CD8-positive, alpha-beta T cell (primary cell): ENCODE measurements at regions of chr11 and their contacts with region 1.

Region 1: GRCh38 chr11:22625448-22626287 is at the start of gene FANCF:
- DNase-seq: peak; percentile 89 to 100 (median 93)
- ATAC-seq: peak; percentile 93
- H3K4me3 ChIP-seq: peak within 1 kb of the TSS; percentile 80 to 96
- H3K4me3 Mint-ChIP-seq: peak within 1 kb of the TSS; percentile 99
- H3K27ac ChIP-seq: peak within 1 kb of the TSS; percentile 86 to 95
- H3K27ac Mint-ChIP-seq: peak within 1 kb of the TSS; percentile 99
- H3K4me1 ChIP-seq: peaks cover 26% of the 10 kb centered on the region
- H3K4me1 Mint-ChIP-seq: peaks cover 52% of the 10 kb centered on the region
- H3K27me3 ChIP-seq: no peaks in the 10 kb centered on the region
- H3K27me3 Mint-ChIP-seq: no peaks in the 10 kb centered on the region
- CTCF ChIP-seq: no peak
- total RNA-seq, gene FANCF: 5.6 to 6.6 TPM

Region 2: GRCh38 chr11:22677153-22677903 is 51.7 kb after region 1 on chr11:
- CTCF ChIA-PET with region 1: no interaction called
- POLR2A ChIA-PET with region 1: no interaction called
- intact Hi-C with region 1: no loop called
- DNase-seq: no peak
- ATAC-seq: no peak
- H3K4me3 ChIP-seq: no peak overlapping the region
- H3K4me3 Mint-ChIP-seq: no peak overlapping the region
- H3K27ac ChIP-seq: no peak overlapping the region
- H3K27ac Mint-ChIP-seq: no peak overlapping the region
- H3K4me1 ChIP-seq: no peaks in the 10 kb centered on the region
- H3K4me1 Mint-ChIP-seq: no peaks in the 10 kb centered on the region
- H3K27me3 ChIP-seq: no peaks in the 10 kb centered on the region
- H3K27me3 Mint-ChIP-seq: peaks cover 11% of the 10 kb centered on the region
- CTCF ChIP-seq: no peak

Region 3: GRCh38 chr11:22690871-22691270 is 65.2 kb after region 1 on chr11:
- CTCF ChIA-PET with region 1: no interaction called
- POLR2A ChIA-PET with region 1: no interaction called
- intact Hi-C with region 1: loop called in 1 of 2 experiments (anchors 5 kb)
- DNase-seq: peak in 5 of 9 experiments; percentile 17 to 68 (median 49)
- ATAC-seq: peak; percentile 97
- H3K4me3 ChIP-seq: peak overlapping the region in 1 of 2 experiments; percentile 29
- H3K4me3 Mint-ChIP-seq: peak overlapping the region; percentile 71
- H3K27ac ChIP-seq: peak overlapping the region; percentile 16 to 48
- H3K27ac Mint-ChIP-seq: peak overlapping the region; percentile 85
- H3K4me1 ChIP-seq: peaks cover 6% of the 10 kb centered on the region
- H3K4me1 Mint-ChIP-seq: peaks cover 22% of the 10 kb centered on the region
- H3K27me3 ChIP-seq: no peaks in the 10 kb centered on the region
- H3K27me3 Mint-ChIP-seq: no peaks in the 10 kb centered on the region
- CTCF ChIP-seq: no peak

Region 4: DNA sequence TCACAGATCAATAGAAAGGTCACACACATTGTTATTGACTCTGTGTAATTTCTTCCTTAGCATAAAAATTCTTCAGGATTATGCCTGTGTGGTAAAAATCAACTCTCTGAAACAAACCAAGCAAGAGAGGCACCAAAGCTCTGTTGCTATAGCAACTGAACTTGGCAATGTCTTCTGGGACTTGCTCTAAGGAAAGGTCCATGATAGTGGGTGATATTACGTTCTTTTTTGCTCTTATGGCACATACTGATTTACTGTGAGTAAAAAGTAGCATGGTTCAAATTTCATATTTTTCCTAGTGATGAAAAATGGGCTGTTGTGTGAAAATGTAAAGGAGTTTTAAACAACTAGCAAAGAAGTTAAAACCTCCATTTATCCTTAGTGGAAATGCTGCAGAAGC is 137.5 kb after region 1 on chr11:
- CTCF ChIA-PET with region 1: no interaction called
- POLR2A ChIA-PET with region 1: no interaction called
- intact Hi-C with region 1: no loop called
- DNase-seq: no peak
- ATAC-seq: no peak
- H3K4me3 ChIP-seq: no peak overlapping the region
- H3K4me3 Mint-ChIP-seq: no peak overlapping the region
- H3K27ac ChIP-seq: no peak overlapping the region
- H3K27ac Mint-ChIP-seq: no peak overlapping the region
- H3K4me1 ChIP-seq: no peaks in the 10 kb centered on the region
- H3K4me1 Mint-ChIP-seq: no peaks in the 10 kb centered on the region
- H3K27me3 ChIP-seq: no peaks in the 10 kb centered on the region
- H3K27me3 Mint-ChIP-seq: no peaks in the 10 kb centered on the region
- CTCF ChIP-seq: no peak

Region 5: DNA sequence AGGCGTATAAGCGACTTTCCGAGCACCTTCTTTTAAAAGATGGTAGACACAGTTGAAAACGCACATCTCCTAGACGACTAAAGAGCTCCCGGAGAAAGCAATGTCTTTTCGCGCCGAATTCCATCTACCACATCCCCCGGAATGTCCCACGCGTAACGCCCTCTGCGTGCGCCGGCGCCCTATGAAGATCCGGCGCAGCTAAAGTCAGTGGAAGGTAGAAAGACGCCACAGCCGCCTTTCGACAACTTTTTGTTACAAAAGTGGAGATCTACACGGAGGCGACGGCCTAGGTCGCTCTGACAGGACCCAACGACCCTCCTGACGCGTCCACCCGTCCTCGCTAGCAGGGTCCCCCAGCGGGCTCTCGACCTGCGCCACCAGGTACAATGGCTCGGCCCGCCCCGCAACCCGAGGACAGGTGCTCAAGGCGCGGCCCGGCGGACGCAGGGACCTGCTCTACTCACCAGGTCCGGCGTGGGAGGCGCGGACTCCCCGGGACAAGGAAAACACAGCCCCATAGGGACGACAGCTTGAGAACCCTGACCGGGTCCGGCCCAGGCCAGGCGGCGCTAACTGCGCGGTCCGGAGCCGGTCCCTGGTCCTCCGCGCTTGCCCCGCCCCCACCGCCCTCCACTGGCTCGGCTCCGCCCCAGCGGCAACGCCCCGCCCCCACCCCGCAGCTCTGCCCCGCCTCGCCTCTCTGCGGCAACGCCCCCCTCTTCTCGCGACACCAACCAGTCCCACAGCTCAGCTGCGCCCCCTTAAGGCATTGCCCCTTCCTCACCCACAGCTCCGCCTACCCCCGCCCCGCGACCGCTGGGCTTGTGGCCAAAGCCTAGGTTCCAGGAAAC is 203.8 kb after region 1 on chr11 and contains the start of gene SVIP:
- CTCF ChIA-PET with region 1: interaction called, 6 read pairs
- POLR2A ChIA-PET with region 1: interaction called, 8 read pairs
- intact Hi-C with region 1: loop called (anchors 1 to 2 kb)
- DNase-seq: peak; percentile 84 to 95 (median 93)
- ATAC-seq: peak; percentile 95
- H3K4me3 ChIP-seq: peak within 1 kb of the TSS; percentile 80 to 86
- H3K4me3 Mint-ChIP-seq: peak within 1 kb of the TSS; percentile 93
- H3K27ac ChIP-seq: peak within 1 kb of the TSS; percentile 74 to 85
- H3K27ac Mint-ChIP-seq: peak within 1 kb of the TSS; percentile 96
- H3K4me1 ChIP-seq: peaks cover 11% of the 10 kb centered on the region
- H3K4me1 Mint-ChIP-seq: peaks cover 19% of the 10 kb centered on the region
- H3K27me3 ChIP-seq: no peaks in the 10 kb centered on the region
- H3K27me3 Mint-ChIP-seq: no peaks in the 10 kb centered on the region
- CTCF ChIP-seq: peak; percentile 64
- total RNA-seq, gene SVIP: 72.4 to 73.6 TPM